CD4-positive, alpha-beta memory T cell (primary cell): ENCODE measurements at regions of chr4 and their contacts with region 1.

Region 1: DNA sequence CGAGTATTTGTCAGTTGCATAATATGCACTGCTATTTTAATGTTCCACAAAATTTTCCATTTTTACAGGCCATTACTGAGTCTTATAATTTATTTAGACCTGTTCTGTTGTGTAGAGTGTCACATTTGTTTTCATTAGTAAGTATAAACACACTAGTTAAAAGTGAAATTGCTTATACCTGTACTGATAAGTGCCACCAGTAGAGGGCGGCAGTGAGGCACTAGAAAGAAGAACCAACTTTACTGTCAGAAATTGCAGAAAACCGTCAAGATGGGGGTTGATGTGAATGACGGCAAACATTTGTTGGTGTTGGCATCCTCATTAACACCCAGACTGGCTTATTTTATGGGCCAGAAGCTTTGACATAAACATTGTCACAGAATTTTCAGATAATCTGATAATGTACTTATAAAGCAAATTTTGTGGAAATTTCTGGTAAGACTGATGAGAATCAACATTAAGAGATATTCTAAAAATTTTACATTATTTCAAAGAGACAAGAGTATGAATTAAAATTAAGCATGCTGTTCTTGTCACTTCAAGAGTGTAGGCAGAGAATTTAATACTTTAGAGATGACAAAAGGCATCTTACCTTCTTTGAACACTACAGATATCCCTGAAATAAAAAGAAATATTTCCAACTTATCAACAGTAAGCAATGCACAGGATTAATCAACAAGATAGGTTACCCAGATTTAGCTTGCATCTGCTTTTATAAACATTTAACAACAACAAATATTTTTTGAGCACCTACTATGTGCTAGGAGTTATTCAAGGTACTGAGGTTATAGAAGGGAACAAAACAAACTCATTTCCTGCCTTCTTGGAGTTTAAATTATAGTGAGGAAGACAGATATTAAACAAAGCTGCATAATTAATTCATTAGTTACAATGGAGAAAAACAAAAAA is 24.9 kb downstream of the ALPK1 start:
- DNase-seq: peak; percentile 71 to 80 (median 73)
- H3K4me3 ChIP-seq: no peak overlapping the region
- H3K4me3 Mint-ChIP-seq: peak overlapping the region in 7 of 8 donors; percentile 33 to 73 (median 51)
- H3K27ac ChIP-seq: no peak overlapping the region
- H3K27ac Mint-ChIP-seq: peak overlapping the region in 2 of 7 donors; percentile 46 to 77
- H3K4me1 ChIP-seq: peaks cover 8% of the 10 kb centered on the region
- H3K4me1 Mint-ChIP-seq: peaks cover 5 to 15% (median 8%) of the 10 kb centered on the region in 4 donors
- H3K27me3 ChIP-seq: no peaks in the 10 kb centered on the region
- H3K27me3 Mint-ChIP-seq: no peaks in the 10 kb centered on the region

Region 2: DNA sequence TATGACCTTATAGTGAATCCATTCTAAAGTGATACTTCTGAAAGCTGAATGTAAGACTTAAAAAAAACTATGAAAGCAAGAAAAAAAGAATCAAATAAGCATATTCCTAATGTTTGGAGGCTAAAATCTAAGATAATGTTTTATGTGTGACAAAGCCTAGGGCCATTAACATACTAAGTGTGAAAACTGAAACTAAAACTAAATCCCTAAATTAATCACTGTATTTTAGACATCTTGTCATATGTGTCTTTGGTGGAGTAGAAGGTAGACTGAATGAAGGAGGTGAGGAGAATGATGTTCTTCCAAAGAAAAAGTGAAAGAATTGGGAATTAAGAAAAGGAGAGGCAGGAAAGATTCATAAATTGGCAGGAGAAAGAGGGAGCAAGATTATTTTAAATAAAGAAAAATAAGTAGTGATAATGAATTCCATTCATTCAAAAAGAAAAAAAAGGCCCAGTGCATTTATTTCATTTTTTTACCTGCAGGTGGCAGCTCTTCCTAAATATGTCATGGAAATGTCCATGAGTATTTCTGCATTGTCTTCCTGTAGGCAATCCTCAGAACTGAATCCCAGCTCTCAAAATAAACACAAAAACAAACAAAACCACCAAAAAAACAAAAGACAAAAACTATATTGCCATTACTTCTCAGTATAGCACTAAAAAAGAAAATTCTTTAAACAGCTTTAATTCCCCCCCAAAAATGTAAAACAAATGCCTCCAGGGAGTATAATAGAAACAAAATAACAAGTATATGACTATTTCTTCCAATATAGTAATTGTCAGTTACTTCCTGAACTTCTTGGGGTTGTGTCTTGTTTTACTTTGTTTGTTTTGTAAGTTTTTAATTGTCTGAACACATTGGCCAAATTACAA is 107.4 kb before region 1 on chr4:
- CTCF ChIA-PET with region 1: interaction called, 3 read pairs
- POLR2A ChIA-PET with region 1: no interaction called
- intact Hi-C with region 1: loop called (anchors 5 kb)
- DNase-seq: peak in 4 of 5 donors; percentile 17 to 24 (median 20)
- H3K4me3 ChIP-seq: no peak overlapping the region
- H3K4me3 Mint-ChIP-seq: no peak overlapping the region
- H3K27ac ChIP-seq: no peak overlapping the region
- H3K27ac Mint-ChIP-seq: peak overlapping the region in 2 of 7 donors; percentile 2 to 26
- H3K4me1 ChIP-seq: no peaks in the 10 kb centered on the region
- H3K4me1 Mint-ChIP-seq: peaks cover 0 to 5% (median 2%) of the 10 kb centered on the region in 4 donors
- H3K27me3 ChIP-seq: no peaks in the 10 kb centered on the region
- H3K27me3 Mint-ChIP-seq: no peaks in the 10 kb centered on the region